MCF 10A (cell line): ENCODE measurements at regions of chr19 and their contacts with region 1.

Region 1: GRCh38 chr19:41959056-41960053 is at the start of gene RABAC1:
- DNase-seq: peak; percentile 89
- H3K4me3 Mint-ChIP-seq: peak within 1 kb of the TSS; percentile 74
- H3K27ac Mint-ChIP-seq: peak within 1 kb of the TSS; percentile 78
- H3K4me1 Mint-ChIP-seq: peaks cover 19% of the 10 kb centered on the region
- H3K27me3 Mint-ChIP-seq: no peaks in the 10 kb centered on the region
- CTCF ChIP-seq: peak; percentile 19
- total RNA-seq, gene RABAC1: 75.4 and 104 TPM in 2 replicates

Region 2: GRCh38 chr19:41859618-41860418 is 99.5 kb before region 1 on chr19 and contains the start of gene RPS19:
- CTCF ChIA-PET with region 1: no interaction called
- POLR2A ChIA-PET with region 1: interaction called, 41 read pairs
- intact Hi-C with region 1: no loop called
- DNase-seq: peak; percentile 100
- H3K4me3 Mint-ChIP-seq: peak within 1 kb of the TSS; percentile 82
- H3K27ac Mint-ChIP-seq: peak within 1 kb of the TSS; percentile 97
- H3K4me1 Mint-ChIP-seq: peaks cover 20% of the 10 kb centered on the region
- H3K27me3 Mint-ChIP-seq: peaks cover 7% of the 10 kb centered on the region
- CTCF ChIP-seq: peak; percentile 55
- total RNA-seq, gene RPS19: 3,060 and 3,357 TPM in 2 replicates

Region 3: DNA sequence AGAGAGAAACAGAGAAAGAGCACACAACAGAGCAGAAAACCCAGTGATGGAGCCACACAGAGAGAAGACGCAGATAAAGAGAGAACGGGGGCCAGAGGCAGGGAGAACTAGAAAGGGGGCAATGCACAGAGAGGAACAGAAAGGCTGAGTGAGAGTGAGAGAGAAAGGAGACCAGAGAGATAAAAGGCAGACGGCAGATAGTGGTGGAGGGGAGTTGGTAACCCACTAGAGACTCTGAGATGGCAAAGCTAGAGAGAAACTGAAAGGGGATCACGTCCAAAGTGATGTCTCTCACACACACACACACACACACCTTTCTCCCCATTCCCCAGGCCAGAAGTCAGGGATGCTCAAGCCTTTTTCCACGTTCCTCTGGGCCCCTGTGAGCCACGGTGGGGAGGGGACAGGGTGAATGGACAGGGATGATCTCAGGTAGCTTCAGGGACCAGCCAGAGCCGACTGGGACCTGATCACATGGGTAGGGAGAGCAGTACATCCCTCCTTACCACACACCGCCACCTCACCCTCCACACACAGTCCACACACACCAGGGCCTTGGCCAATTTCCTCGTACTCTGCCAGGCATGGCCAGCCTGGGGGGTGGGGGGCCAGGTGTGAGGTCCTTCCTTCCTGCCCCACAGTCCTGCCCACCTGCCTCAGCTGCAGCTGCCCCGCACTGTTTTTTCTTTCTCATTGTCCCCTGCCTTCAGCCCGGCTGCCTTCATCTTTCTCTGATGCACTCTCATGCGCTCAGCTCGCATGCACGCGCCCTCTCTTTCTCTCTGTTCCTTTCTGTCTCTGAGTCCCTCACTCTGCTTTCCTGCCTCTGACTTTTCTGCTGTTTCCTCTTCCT is 195.3 kb after region 1 on chr19:
- CTCF ChIA-PET with region 1: no interaction called
- POLR2A ChIA-PET with region 1: no interaction called
- intact Hi-C with region 1: no loop called
- DNase-seq: no peak
- H3K4me3 Mint-ChIP-seq: no peak overlapping the region
- H3K27ac Mint-ChIP-seq: no peak overlapping the region
- H3K4me1 Mint-ChIP-seq: no peaks in the 10 kb centered on the region
- H3K27me3 Mint-ChIP-seq: peaks cover 71% of the 10 kb centered on the region
- CTCF ChIP-seq: no peak